Activated CD4-positive, alpha-beta T cell treated with anti-CD3 and anti-CD28 coated beads for 36 hours (primary cell): ENCODE measurements at regions of chr14 and their contacts with region 1.

Region 1: DNA sequence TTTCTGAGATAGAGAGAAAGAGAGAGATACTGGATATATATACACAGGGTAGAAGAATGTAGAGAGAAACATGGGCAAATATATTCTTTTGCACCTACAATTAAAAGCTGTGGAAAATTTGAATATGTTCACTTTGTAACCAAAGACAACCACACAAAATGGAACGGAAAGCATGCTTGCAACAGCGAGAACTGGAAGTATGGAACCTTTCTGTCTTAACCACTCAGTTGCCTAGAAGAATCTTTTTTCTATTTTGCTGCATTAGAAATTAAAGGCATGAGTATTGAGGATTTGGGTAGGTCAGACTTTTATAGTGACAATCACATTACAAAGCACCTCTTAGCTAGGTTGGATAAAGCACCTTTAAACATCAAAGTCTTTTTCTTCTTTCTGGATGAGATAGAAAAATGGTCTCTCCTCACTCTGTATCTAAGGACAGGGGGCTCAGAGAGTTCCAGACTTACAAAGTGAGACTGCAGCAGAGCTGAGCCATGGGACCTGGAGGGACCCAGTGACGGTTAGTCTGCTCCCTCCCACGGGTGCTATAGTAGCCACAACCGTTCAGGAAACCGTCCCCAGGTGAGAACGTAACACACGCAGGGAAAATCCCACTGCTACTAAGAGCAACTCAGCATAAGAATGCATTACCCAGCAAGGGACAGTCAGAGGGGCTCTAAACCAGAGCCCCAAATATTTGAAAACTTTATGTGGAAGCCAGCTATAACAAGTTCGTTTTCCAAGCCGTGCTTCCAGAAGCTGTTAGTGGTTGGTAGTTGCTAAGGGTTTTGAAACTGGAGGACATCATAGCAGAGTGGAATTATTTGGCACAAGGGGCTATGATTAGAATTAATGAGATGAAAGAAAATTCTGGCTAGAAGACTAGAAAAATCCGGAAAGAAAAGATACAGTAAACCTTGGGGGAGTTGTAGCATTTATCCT is 97.1 kb downstream of the DAD1 start:
- DNase-seq: peak; percentile 65
- ATAC-seq: peak; percentile 37
- H3K4me3 Mint-ChIP-seq: peak overlapping the region; percentile 84
- H3K27ac Mint-ChIP-seq: peak overlapping the region; percentile 99
- H3K4me1 Mint-ChIP-seq: peaks cover 7% of the 10 kb centered on the region
- H3K27me3 Mint-ChIP-seq: no peaks in the 10 kb centered on the region

Region 2: DNA sequence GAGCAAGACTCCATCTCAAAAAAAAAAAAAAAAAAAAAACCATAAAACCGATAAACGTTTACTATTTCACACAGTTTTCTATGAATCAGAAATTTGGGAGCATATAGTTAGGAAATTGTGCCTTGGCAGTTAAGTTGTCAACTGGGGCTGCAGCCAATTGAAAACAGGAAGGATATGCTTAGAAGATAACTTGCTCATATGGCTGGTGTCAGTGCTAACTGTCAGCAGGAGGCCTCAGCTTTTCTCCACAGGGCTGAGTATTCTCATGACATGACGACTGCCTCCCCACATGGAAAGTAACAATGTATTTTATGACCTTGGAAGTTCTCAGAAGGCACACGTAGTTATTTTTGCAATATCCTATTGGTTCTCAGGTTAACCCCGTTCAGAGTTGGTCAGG is 1306.5 kb before region 1 on chr14:
- CTCF ChIA-PET with region 1: no interaction called
- POLR2A ChIA-PET with region 1: no interaction called
- intact Hi-C with region 1: no loop called
- DNase-seq: no peak
- ATAC-seq: no peak
- H3K4me3 Mint-ChIP-seq: no peak overlapping the region
- H3K27ac Mint-ChIP-seq: no peak overlapping the region
- H3K4me1 Mint-ChIP-seq: no peaks in the 10 kb centered on the region
- H3K27me3 Mint-ChIP-seq: peaks cover 7% of the 10 kb centered on the region

Region 3: GRCh38 chr14:21647380-21647779 is 844.6 kb before region 1 on chr14:
- CTCF ChIA-PET with region 1: no interaction called
- POLR2A ChIA-PET with region 1: no interaction called
- intact Hi-C with region 1: no loop called
- DNase-seq: no peak
- ATAC-seq: no peak
- H3K4me3 Mint-ChIP-seq: no peak overlapping the region
- H3K27ac Mint-ChIP-seq: no peak overlapping the region
- H3K4me1 Mint-ChIP-seq: no peaks in the 10 kb centered on the region
- H3K27me3 Mint-ChIP-seq: peaks cover 13% of the 10 kb centered on the region

Region 4: GRCh38 chr14:22163051-22163450 is 328.9 kb before region 1 on chr14:
- CTCF ChIA-PET with region 1: no interaction called
- POLR2A ChIA-PET with region 1: no interaction called
- intact Hi-C with region 1: loop called (anchors 1 to 5 kb)
- DNase-seq: no peak
- ATAC-seq: peak; percentile 52
- H3K4me3 Mint-ChIP-seq: peak overlapping the region; percentile 67
- H3K27ac Mint-ChIP-seq: peak overlapping the region; percentile 83
- H3K4me1 Mint-ChIP-seq: peaks cover 19% of the 10 kb centered on the region
- H3K27me3 Mint-ChIP-seq: no peaks in the 10 kb centered on the region

Region 5: GRCh38 chr14:22221508-22221907 is 270.4 kb before region 1 on chr14:
- CTCF ChIA-PET with region 1: interaction called, 4 read pairs
- POLR2A ChIA-PET with region 1: no interaction called
- intact Hi-C with region 1: loop called in 1 of 2 experiments (anchors 5 kb)
- DNase-seq: no peak
- ATAC-seq: no peak
- H3K4me3 Mint-ChIP-seq: peak overlapping the region; percentile 58
- H3K27ac Mint-ChIP-seq: peak overlapping the region; percentile 51
- H3K4me1 Mint-ChIP-seq: peaks cover 14% of the 10 kb centered on the region
- H3K27me3 Mint-ChIP-seq: no peaks in the 10 kb centered on the region

Region 6: DNA sequence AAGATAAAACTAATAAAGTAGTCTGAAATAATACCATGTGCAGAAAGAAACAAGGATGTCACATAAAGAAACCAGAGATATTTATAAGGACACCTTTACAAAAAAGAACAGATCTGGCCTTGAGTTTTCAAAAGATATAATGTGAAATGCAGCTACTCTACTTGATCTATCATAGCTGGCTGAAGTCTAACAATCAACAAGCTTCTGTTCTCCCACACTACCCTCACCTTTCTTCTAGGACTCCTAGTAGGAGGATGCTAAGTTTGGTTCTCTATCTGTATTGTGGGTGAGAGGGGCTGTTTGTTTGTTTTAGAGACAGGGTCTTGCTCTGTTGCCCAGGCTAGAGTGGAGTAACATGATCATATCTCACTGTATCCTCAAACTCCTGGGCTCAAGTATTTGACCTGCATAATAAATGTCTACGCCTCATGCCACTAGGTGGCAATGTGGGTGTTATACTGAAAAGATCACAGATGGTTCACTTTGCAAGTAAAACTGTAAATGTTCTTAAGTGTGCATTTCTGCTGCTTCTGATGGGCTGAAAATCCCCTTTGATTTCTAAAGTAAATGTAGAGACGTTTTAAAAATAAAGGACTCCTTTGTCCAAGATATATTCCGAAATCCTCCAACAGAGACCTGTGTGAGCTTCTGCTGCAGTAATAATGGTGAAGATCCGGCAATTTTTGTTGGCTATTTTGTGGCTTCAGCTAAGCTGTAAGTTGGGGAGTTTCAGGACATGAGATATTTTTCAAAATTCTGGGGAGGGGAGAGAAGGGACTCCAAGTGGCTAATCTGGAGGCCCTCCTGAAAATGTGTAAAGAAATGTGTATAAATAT is 172.2 kb before region 1 on chr14:
- CTCF ChIA-PET with region 1: no interaction called
- POLR2A ChIA-PET with region 1: no interaction called
- intact Hi-C with region 1: loop called (anchors 5 kb)
- DNase-seq: peak; percentile 11
- ATAC-seq: peak; percentile 19
- H3K4me3 Mint-ChIP-seq: peak overlapping the region; percentile 63
- H3K27ac Mint-ChIP-seq: peak overlapping the region; percentile 74
- H3K4me1 Mint-ChIP-seq: no peaks in the 10 kb centered on the region
- H3K27me3 Mint-ChIP-seq: no peaks in the 10 kb centered on the region

Region 7: GRCh38 chr14:22518073-22518472 is 26.1 kb after region 1 on chr14:
- CTCF ChIA-PET with region 1: no interaction called
- POLR2A ChIA-PET with region 1: no interaction called
- intact Hi-C with region 1: no loop called
- DNase-seq: no peak
- ATAC-seq: no peak
- H3K4me3 Mint-ChIP-seq: peak overlapping the region; percentile 84
- H3K27ac Mint-ChIP-seq: peak overlapping the region; percentile 97
- H3K4me1 Mint-ChIP-seq: peaks cover 80% of the 10 kb centered on the region
- H3K27me3 Mint-ChIP-seq: no peaks in the 10 kb centered on the region

Region 8: GRCh38 chr14:22598099-22598899 is 106.3 kb after region 1 on chr14 and contains the start of gene ABHD4:
- CTCF ChIA-PET with region 1: no interaction called
- POLR2A ChIA-PET with region 1: no interaction called
- intact Hi-C with region 1: no loop called
- DNase-seq: peak; percentile 82
- ATAC-seq: peak; percentile 75
- H3K4me3 Mint-ChIP-seq: peak within 1 kb of the TSS; percentile 90
- H3K27ac Mint-ChIP-seq: peak within 1 kb of the TSS; percentile 80
- H3K4me1 Mint-ChIP-seq: peaks cover 22% of the 10 kb centered on the region
- H3K27me3 Mint-ChIP-seq: peaks cover under 1% of the 10 kb centered on the region
- total RNA-seq, gene ABHD4: 8.3 to 10.5 TPM